Posterior vena cava (tissue), 2 donors: ENCODE measurements at regions of chr16 and their contacts with region 1.

Region 1: DNA sequence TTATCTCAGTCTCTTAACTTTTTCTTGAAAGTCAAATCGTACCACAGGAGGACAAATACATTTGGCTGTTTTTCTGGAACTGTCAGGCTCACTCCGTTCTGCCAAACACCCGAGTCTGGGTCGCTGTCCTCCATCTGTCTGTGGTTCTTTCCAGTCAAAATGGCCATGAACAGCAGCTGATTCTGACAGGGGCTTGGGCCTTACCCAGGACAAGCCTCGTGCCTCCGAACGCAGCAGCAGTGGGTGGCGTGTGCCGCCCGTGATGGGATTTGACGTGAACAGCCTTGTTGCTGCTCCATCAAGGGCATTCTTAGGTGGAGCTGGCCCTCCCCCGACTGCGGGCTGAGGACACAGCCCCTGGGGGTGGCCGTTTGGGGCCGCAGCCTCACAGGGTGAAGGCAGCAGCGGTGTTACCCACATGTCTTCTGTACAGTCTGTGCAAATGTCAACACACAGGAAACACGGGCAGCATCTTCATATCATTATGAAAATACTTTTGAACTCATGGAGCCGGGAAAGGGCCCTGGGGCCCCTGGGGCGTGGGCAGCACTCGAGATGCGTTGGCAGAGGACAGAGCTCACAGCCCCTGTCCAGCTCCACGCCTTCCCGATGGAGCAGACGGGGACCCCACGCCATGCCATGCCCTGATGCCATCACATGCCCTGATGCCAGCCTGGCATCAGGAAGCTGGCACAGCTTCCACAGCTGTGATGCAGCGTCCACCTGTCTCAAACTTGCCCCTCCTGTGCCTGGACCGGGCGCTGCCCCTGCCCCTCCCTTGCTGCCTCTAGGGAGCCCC is 8.6 kb upstream of the ACSF3 start:
- DNase-seq: no peak

Region 2: GRCh38 chr16:89969741-89970410 is 884.9 kb after region 1 on chr16:
- intact Hi-C with region 1: loop called in 1 of 2 experiments (anchors 5 kb)
- DNase-seq: no peak